ENCODE measurements at regions of chr5 and their contacts with region 1.

Region 1: GRCh38 chr5:154541553-154541952 is 63.5 kb upstream of the HAND1 start:
- DNase-seq: no peak
- H3K4me3 ChIP-seq: no peak overlapping the region
- H3K27ac ChIP-seq: no peak overlapping the region
- H3K4me1 ChIP-seq: no peaks in the 10 kb centered on the region
- H3K27me3 ChIP-seq: no peaks in the 10 kb centered on the region
- CTCF ChIP-seq: no peak

Region 2: GRCh38 chr5:154520861-154521453 is 20.6 kb before region 1 on chr5:
- CTCF ChIA-PET with region 1: interaction called, 15 read pairs
- POLR2A ChIA-PET with region 1: no interaction called
- intact Hi-C with region 1: no loop called
- DNase-seq: peak; percentile 25
- H3K4me3 ChIP-seq: no peak overlapping the region
- H3K27ac ChIP-seq: no peak overlapping the region
- H3K4me1 ChIP-seq: no peaks in the 10 kb centered on the region
- H3K27me3 ChIP-seq: no peaks in the 10 kb centered on the region
- CTCF ChIP-seq: peak; percentile 78

Region 3: DNA sequence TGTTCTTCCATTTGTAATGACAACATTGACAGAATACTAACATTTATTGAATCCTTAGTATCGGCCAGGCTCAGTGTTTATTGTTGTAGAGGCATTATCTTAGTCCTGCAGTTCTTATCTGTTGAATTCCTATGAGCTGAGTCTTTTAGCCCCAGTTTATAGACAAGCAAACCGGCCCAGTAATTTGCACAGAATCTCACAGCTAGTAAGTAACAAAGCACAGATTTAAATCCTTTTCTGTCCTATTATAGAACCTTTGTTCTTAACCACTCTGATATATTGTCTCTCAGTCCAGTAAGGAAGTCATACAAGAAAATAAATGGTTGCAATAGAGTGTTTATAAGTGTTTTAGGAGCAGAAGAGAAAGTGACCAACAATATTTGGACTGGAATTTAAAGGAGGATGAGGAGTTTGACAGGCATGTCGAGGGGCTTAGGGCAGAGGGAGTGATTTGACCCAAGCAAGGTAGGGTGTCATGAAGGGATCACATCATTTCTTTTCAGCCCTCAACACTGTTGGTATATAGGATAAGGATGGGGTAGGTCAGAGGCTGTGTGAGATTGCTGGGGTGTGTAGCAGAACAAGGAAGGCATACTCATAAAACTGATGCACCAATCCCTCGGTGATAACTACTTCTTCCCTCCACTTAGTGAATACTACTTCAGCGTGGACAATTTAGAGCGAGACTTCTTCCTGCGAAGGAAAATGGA is 253.1 kb after region 1 on chr5:
- CTCF ChIA-PET with region 1: no interaction called
- POLR2A ChIA-PET with region 1: no interaction called
- intact Hi-C with region 1: no loop called
- DNase-seq: no peak
- H3K4me3 ChIP-seq: no peak overlapping the region
- H3K27ac ChIP-seq: no peak overlapping the region
- H3K4me1 ChIP-seq: no peaks in the 10 kb centered on the region
- H3K27me3 ChIP-seq: no peaks in the 10 kb centered on the region
- CTCF ChIP-seq: no peak

Measured in A673 (cell line).